Mammary epithelial cell (primary cell): ENCODE measurements at regions of chr12 and their contacts with region 1.

Region 1: DNA sequence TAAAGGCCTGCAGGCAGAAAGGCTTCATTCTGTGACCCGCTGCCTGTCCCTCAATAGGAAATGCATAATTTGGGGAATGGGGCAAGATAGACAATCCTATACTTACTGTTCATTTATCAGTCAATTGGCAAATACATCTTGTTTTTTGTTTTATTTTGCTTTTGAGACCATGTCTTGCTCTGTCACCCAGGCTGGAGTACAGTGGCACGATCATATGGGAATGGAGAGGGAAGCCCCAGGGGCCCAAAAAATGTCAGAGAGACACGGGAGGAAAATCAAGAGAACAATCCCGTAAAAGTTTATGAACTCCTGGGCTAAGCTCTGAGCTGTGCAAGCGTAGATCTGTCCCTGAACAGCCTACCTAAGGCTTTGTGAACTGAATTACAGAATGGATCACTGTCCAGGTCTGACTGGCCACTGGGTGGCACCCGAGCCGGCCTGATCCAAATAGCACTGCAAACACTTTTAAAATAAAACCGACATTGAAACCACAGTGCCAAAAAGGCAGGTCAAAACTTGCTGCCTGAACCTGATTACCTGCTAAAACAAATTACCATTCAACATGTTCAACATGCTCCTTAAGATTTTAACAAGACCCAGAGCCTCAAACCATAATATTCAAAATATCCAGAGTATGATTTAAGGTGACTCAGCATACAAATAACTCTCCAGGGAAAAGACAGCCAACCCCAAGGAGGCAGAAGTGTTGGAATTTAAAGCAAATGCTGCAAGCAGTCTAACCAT is 11.8 kb downstream of the COPS7A start:
- DNase-seq: peak; percentile 97
- H3K4me3 ChIP-seq: no peak overlapping the region
- H3K27ac ChIP-seq: peak overlapping the region; percentile 7
- H3K4me1 ChIP-seq: peaks cover 13% of the 10 kb centered on the region
- H3K27me3 ChIP-seq: no peaks in the 10 kb centered on the region
- CTCF ChIP-seq: peak; percentile 76 to 81

Region 2: GRCh38 chr12:6834873-6835272 is 99.3 kb after region 1 on chr12:
- CTCF ChIA-PET with region 1: no interaction called
- dilution Hi-C with region 1: loop called (anchors 5 kb)
- in situ Hi-C with region 1: no loop called
- intact Hi-C with region 1: loop called (anchors 1 kb)
- DNase-seq: no peak
- H3K4me3 ChIP-seq: no peak overlapping the region
- H3K27ac ChIP-seq: no peak overlapping the region
- H3K4me1 ChIP-seq: no peaks in the 10 kb centered on the region
- H3K27me3 ChIP-seq: peaks cover 4% of the 10 kb centered on the region
- CTCF ChIP-seq: no peak

Region 3: GRCh38 chr12:6914246-6914946 is 178.8 kb after region 1 on chr12 and contains the start of gene ENO2:
- CTCF ChIA-PET with region 1: no interaction called
- dilution Hi-C with region 1: no loop called
- in situ Hi-C with region 1: no loop called
- intact Hi-C with region 1: no loop called
- DNase-seq: no peak
- H3K4me3 ChIP-seq: peak within 1 kb of the TSS; percentile 56 to 62 (median 58)
- H3K27ac ChIP-seq: no peak within 1 kb of the TSS
- H3K4me1 ChIP-seq: peaks cover 22% of the 10 kb centered on the region
- H3K27me3 ChIP-seq: no peaks in the 10 kb centered on the region
- CTCF ChIP-seq: no peak
- total RNA-seq, gene ENO2: 1.7 to 7.5 TPM